ENCODE measurements at regions of chr3 and their contacts with region 1.

Region 1: GRCh38 chr3:190883973-190884832 is 21.7 kb upstream of the GMNC start:
- DNase-seq: peak; percentile 25
- H3K4me3 ChIP-seq: no peak overlapping the region
- H3K27ac ChIP-seq: no peak overlapping the region
- H3K4me1 ChIP-seq: no peaks in the 10 kb centered on the region
- H3K27me3 ChIP-seq: no peaks in the 10 kb centered on the region
- CTCF ChIP-seq: peak; percentile 90 to 96

Region 2: GRCh38 chr3:190811775-190812480 is 72.3 kb before region 1 on chr3:
- CTCF ChIA-PET with region 1: no interaction called
- dilution Hi-C with region 1: no loop called
- in situ Hi-C with region 1: no loop called
- intact Hi-C with region 1: loop called (anchors 2 kb)
- DNase-seq: peak; percentile 40
- H3K4me3 ChIP-seq: peak overlapping the region; percentile 11 to 52 (median 35)
- H3K27ac ChIP-seq: no peak overlapping the region
- H3K4me1 ChIP-seq: peaks cover 15% of the 10 kb centered on the region
- H3K27me3 ChIP-seq: no peaks in the 10 kb centered on the region
- CTCF ChIP-seq: peak; percentile 74 to 75

Region 3: GRCh38 chr3:190855151-190855550 is 29.1 kb before region 1 on chr3:
- CTCF ChIA-PET with region 1: no interaction called
- dilution Hi-C with region 1: no loop called
- in situ Hi-C with region 1: no loop called
- intact Hi-C with region 1: no loop called
- DNase-seq: no peak
- H3K4me3 ChIP-seq: no peak overlapping the region
- H3K27ac ChIP-seq: no peak overlapping the region
- H3K4me1 ChIP-seq: no peaks in the 10 kb centered on the region
- H3K27me3 ChIP-seq: no peaks in the 10 kb centered on the region
- CTCF ChIP-seq: no peak

Region 4: GRCh38 chr3:191051037-191051436 is 166.8 kb after region 1 on chr3:
- CTCF ChIA-PET with region 1: interaction called, 4 read pairs
- dilution Hi-C with region 1: no loop called
- in situ Hi-C with region 1: no loop called
- intact Hi-C with region 1: loop called (anchors 1 kb)
- DNase-seq: peak; percentile 16
- H3K4me3 ChIP-seq: no peak overlapping the region
- H3K27ac ChIP-seq: no peak overlapping the region
- H3K4me1 ChIP-seq: no peaks in the 10 kb centered on the region
- H3K27me3 ChIP-seq: no peaks in the 10 kb centered on the region
- CTCF ChIP-seq: peak; percentile 33 to 39

Region 5: DNA sequence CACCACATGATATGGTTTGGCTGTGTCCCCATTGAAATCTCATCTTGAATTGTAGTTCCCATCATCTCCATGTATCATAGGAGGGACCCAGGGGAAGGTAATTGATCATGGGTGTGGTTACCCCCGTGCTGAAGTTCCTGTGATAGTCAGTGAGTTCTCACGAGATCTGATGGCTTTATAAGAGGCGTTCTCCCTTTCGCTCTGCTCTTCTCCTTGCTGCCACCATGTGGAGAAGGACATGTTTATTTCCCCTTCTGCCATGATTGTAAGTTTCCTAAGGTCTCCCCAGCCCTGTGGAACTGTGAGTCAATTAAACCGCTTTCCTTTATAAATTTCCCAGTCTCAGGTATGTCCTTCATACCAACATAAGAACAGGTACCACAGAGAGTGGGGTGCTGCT is 336.7 kb after region 1 on chr3:
- CTCF ChIA-PET with region 1: no interaction called
- dilution Hi-C with region 1: no loop called
- in situ Hi-C with region 1: no loop called
- intact Hi-C with region 1: loop called (anchors 1 kb)
- DNase-seq: peak; percentile 7
- H3K4me3 ChIP-seq: no peak overlapping the region
- H3K27ac ChIP-seq: no peak overlapping the region
- H3K4me1 ChIP-seq: no peaks in the 10 kb centered on the region
- H3K27me3 ChIP-seq: no peaks in the 10 kb centered on the region
- CTCF ChIP-seq: peak in 1 of 2 donors; percentile 27